PC-3 (cell line): ENCODE measurements at regions of chr14 and their contacts with region 1.

Region 1: DNA sequence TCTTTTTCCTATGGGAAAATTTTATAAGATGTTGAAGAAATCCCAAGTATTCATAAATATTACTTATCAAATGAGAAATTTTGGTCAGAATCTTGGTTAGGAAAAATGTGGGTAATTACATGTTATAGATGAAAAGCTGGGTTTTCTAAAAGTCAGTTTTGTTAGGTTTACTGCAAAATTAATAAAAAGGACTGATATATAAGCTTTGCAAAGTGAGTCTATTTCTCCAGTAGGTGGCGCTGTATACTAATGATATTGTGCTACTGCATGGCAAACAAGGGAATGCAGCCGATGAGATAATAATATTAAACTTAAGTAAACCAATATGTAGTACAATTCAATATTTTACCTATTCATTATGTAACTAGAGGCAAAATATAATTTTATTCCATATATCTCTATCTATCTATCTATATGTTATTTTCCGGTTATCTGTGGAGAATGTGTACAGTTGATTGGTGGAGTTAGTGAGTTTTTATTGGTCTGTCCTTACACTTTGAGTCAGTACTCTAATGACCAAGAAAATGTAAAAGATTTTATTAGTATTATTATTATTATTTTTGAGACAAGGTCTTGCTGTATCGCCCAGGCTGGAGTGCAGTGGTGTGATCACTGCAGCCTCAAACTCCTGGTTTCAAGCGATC is 32.9 kb downstream of the MIPOL1 start:
- DNase-seq: peak; percentile 89
- ATAC-seq: peak; percentile 80
- H3K4me3 ChIP-seq: no peak overlapping the region
- H3K27ac ChIP-seq: no peak overlapping the region
- H3K4me1 ChIP-seq: no peaks in the 10 kb centered on the region
- H3K27me3 ChIP-seq: no peaks in the 10 kb centered on the region
- CTCF ChIP-seq: peak; percentile 93

Region 2: GRCh38 chr14:36655963-36656686 is 574.5 kb before region 1 on chr14:
- CTCF ChIA-PET with region 1: no interaction called
- POLR2A ChIA-PET with region 1: no interaction called
- intact Hi-C with region 1: loop called (anchors 5 kb)
- DNase-seq: peak; percentile 77
- ATAC-seq: peak; percentile 39
- H3K4me3 ChIP-seq: peak overlapping the region; percentile 60
- H3K27ac ChIP-seq: no peak overlapping the region
- H3K4me1 ChIP-seq: peaks cover 18% of the 10 kb centered on the region
- H3K27me3 ChIP-seq: no peaks in the 10 kb centered on the region
- CTCF ChIP-seq: peak; percentile 74

Region 3: DNA sequence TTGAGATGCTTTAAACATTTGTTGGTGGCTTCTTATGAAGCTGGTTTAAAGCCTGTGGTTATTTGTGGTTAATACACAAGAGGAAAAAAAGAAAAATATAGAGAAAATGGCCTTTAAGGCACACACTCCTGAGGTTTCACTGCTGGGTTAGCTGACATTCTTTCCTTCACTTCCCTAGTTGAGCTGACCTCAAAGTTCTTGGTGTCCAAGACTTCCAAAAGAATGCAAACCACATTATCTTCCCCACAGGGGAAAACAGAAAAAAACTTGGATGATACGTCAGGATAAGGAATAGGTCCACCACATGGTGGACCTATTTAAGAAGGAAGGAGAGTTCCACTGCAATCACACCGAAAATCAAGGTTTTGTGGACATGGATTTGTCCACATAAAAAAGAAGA is 152.5 kb before region 1 on chr14:
- CTCF ChIA-PET with region 1: no interaction called
- POLR2A ChIA-PET with region 1: no interaction called
- intact Hi-C with region 1: no loop called
- DNase-seq: no peak
- ATAC-seq: no peak
- H3K4me3 ChIP-seq: no peak overlapping the region
- H3K27ac ChIP-seq: no peak overlapping the region
- H3K4me1 ChIP-seq: peaks cover 12% of the 10 kb centered on the region
- H3K27me3 ChIP-seq: no peaks in the 10 kb centered on the region
- CTCF ChIP-seq: no peak

Region 4: GRCh38 chr14:37150414-37150813 is 80.3 kb before region 1 on chr14:
- CTCF ChIA-PET with region 1: interaction called, 11 read pairs
- POLR2A ChIA-PET with region 1: no interaction called
- intact Hi-C with region 1: loop called (anchors 1 kb)
- DNase-seq: peak; percentile 76
- ATAC-seq: peak; percentile 82
- H3K4me3 ChIP-seq: no peak overlapping the region
- H3K27ac ChIP-seq: no peak overlapping the region
- H3K4me1 ChIP-seq: peaks cover 5% of the 10 kb centered on the region
- H3K27me3 ChIP-seq: no peaks in the 10 kb centered on the region
- CTCF ChIP-seq: peak; percentile 90

Region 5: GRCh38 chr14:37172024-37172869 is 58.4 kb before region 1 on chr14 and contains the start of gene SLC25A21:
- CTCF ChIA-PET with region 1: interaction called, 4 read pairs
- POLR2A ChIA-PET with region 1: no interaction called
- intact Hi-C with region 1: loop called (anchors 2 kb)
- DNase-seq: peak; percentile 87
- ATAC-seq: peak; percentile 94
- H3K4me3 ChIP-seq: peak within 1 kb of the TSS; percentile 82
- H3K27ac ChIP-seq: peak within 1 kb of the TSS; percentile 87
- H3K4me1 ChIP-seq: peaks cover 15% of the 10 kb centered on the region
- H3K27me3 ChIP-seq: no peaks in the 10 kb centered on the region
- CTCF ChIP-seq: 0 out of 2 replicates have a peak, but pooled peaks have one; percentile 29
- total RNA-seq, gene SLC25A21: 0.87 and 1.0 TPM in 2 replicates